Tibial artery (tissue), 4 donors: ENCODE measurements at regions of chr5 and their contacts with region 1.

Region 1: GRCh38 chr5:141878711-141879425 is 658 bp upstream of the PCDH1 start:
- DNase-seq: peak; percentile 90 to 93
- H3K4me3 ChIP-seq: peak overlapping the region; percentile 68 to 82
- H3K27ac ChIP-seq: peak overlapping the region; percentile 74 to 76
- H3K4me1 ChIP-seq: peaks cover 0 to 53% (median 39%) of the 10 kb centered on the region in 4 donors
- H3K27me3 ChIP-seq: peaks cover 0 to 64% of the 10 kb centered on the region in 2 donors
- CTCF ChIP-seq: peak; percentile 95 to 97

Region 2: DNA sequence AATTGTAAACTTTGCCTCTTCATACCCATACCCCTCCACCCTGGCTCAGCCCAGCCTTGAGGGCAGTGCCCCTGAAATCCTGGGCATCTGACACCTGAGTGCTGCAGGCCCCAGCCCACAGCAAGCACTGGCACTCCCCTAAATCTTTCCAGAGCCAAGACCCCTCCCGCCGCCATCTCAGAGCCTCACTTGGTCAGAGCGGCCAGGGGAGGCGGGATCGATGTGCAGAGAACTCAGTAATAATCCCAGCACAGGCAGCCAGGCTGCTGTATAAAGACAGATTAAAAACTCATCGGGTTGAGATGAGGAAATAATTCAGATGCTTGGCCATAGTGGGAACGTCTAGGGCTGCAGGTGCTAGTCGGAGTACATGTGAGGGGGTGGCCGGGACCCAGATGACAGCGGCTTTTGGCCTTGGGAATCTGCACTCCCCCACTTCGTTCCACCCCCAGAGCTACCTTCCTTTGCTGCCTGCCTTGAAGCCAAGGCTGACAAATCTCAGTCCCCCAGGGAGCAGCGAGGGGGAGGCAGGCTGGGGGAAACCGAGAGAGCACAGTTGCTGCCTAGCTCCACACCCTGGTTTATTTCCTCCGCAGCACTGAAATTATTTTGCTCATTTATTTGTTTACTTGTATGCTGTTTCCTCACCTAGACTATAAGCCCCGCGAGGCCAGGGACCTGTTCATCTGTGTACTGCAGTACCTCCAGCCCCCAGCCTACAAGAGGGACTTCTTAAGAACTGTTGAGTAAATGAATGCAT is 177.3 kb before region 1 on chr5:
- intact Hi-C with region 1: loop called (anchors 2 kb)
- DNase-seq: no peak
- H3K4me3 ChIP-seq: no peak overlapping the region
- H3K27ac ChIP-seq: no peak overlapping the region
- H3K4me1 ChIP-seq: peaks cover 0 to 23% (median 17%) of the 10 kb centered on the region in 4 donors
- H3K27me3 ChIP-seq: peaks cover 0 to 59% of the 10 kb centered on the region in 2 donors
- CTCF ChIP-seq: no peak

Region 3: GRCh38 chr5:141811287-141812155 is 67.3 kb before region 1 on chr5:
- intact Hi-C with region 1: loop called (anchors 10 kb)
- DNase-seq: no peak
- H3K4me3 ChIP-seq: peak overlapping the region in 1 of 2 donors; percentile 16
- H3K27ac ChIP-seq: no peak overlapping the region
- H3K4me1 ChIP-seq: peaks cover 0 to 8% (median 6%) of the 10 kb centered on the region in 4 donors
- H3K27me3 ChIP-seq: peaks cover 0 to 13% of the 10 kb centered on the region in 2 donors
- CTCF ChIP-seq: peak in 1 of 2 experiments; percentile 44

Region 4: GRCh38 chr5:141843162-141843927 is 35.5 kb before region 1 on chr5:
- intact Hi-C with region 1: loop called (anchors 5 kb)
- DNase-seq: no peak
- H3K4me3 ChIP-seq: no peak overlapping the region
- H3K27ac ChIP-seq: peak overlapping the region; percentile 66 to 69
- H3K4me1 ChIP-seq: peaks cover 0 to 78% (median 58%) of the 10 kb centered on the region in 4 donors
- H3K27me3 ChIP-seq: no peaks in the 10 kb centered on the region
- CTCF ChIP-seq: no peak

Region 5: DNA sequence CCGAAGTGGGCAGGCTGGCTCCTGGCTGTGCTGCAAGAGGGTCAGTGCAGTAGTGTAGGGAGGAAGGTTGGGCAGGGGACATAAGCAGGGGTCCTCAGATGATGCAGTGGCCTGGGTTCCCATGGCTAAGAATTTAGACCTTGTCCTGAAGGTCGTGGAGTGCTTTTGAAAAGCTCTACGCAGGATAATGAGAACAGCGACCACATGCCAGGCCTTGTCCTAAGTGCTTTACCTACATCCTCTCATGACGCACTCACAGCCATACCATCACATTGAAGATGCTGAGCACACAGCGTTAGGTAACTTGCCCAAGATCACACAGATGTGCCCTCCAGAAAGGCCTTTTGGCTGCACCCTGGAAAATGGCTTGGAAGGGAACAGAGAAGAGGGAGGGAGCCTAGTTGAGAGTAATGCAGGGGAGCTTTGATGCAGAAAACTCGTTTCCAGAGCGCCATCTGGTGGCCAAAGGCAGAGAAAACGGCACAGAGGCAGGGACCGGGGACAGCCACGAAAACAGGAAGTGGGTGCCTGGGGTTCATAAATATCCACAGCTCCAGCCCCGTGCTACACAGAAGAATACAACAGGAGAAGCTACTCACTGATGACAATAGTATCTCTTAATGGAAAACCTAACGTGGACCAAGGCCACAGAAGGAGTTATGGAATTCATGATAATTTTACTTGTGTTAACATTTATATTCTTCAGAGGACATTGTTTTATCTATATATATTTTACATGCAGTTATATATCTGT is 81.8 kb after region 1 on chr5:
- intact Hi-C with region 1: loop called (anchors 5 kb)
- DNase-seq: peak; percentile 85 to 92
- H3K4me3 ChIP-seq: no peak overlapping the region
- H3K27ac ChIP-seq: no peak overlapping the region
- H3K4me1 ChIP-seq: no peaks in the 10 kb centered on the region
- H3K27me3 ChIP-seq: no peaks in the 10 kb centered on the region
- CTCF ChIP-seq: peak; percentile 79 to 90